ENCODE measurements at regions of chr2 and their contacts with region 1.

Region 1: DNA sequence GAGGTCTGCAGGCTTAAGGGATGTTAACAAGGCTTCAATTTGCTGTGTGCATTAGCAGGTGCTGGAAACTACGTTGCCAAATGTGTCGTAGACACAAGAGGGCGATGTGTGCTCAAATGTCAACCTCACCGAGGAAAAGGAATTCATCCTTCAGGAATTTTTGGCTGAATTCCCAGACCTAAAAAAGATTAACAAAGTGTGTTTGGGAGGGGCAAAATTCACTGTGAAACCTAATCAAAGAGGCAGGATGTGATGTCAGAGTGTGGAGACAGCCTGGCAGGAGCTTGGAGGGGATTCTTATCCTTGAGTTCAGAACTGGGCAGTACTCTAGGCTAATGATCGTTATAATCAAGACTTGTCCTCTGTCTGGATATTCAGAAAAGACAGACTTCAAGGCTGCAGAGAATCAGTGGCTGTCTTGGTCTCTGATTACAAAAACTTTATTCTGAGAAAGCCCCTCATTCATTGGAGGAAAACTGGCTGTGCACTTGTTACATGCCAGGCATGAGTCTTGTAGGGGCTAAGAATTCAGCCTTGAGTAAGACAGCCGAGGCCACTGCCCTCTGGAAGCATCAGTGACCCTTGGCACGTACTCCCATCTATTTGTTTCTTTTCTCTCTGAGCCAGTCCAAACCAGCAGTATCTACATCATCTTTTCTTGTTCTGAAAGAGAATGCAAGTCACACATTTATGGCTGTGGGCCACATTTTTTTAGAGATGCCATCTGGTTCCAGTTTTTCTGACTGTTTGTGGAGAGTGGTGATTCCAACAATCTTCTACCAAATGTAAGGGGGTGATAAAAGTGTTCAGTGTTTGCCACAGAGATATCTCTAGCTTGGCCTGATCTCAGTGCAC is 18.7 kb upstream of the SCYGR1 start:
- DNase-seq: peak in 1 of 2 donors; percentile 87
- H3K4me3 ChIP-seq: peak overlapping the region in 1 of 2 donors; percentile 10
- H3K27ac ChIP-seq: peak overlapping the region; percentile 67 to 84
- H3K4me1 ChIP-seq: peaks cover 0 to 10% of the 10 kb centered on the region in 2 donors
- H3K27me3 ChIP-seq: no peaks in the 10 kb centered on the region
- CTCF ChIP-seq: peak; percentile 57 to 74 (median 63)

Region 2: DNA sequence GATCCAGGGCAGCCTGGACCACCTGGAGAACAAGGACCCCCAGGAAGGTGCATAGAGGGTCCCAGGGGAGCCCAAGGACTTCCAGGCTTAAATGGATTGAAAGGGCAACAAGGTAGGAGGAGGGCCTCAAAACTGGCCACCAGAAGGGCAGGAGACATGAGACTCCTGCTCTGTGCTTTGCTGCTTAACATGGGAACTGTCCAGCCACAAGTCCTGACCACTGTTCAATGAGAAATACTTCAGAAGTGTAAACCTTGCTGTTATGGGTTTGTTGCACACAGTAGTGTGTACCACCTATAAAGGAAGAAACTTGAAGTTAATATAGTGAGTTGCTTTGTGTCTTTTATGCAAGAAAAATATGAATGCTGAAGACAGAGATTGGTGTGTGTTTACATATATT is 125.5 kb before region 1 on chr2:
- intact Hi-C with region 1: no loop called
- DNase-seq: no peak
- H3K4me3 ChIP-seq: no peak overlapping the region
- H3K27ac ChIP-seq: no peak overlapping the region
- H3K4me1 ChIP-seq: no peaks in the 10 kb centered on the region
- H3K27me3 ChIP-seq: no peaks in the 10 kb centered on the region
- CTCF ChIP-seq: no peak

Region 3: GRCh38 chr2:227324995-227325838 is 81.2 kb before region 1 on chr2 and contains the start of gene MFF:
- intact Hi-C with region 1: loop called (anchors 1 kb)
- DNase-seq: peak; percentile 65 to 95
- H3K4me3 ChIP-seq: peak within 1 kb of the TSS; percentile 91 to 95
- H3K27ac ChIP-seq: peak within 1 kb of the TSS; percentile 94 to 95
- H3K4me1 ChIP-seq: peaks cover 0 to 9% of the 10 kb centered on the region in 2 donors
- H3K27me3 ChIP-seq: no peaks in the 10 kb centered on the region
- CTCF ChIP-seq: peak in 1 of 3 experiments; percentile 35
- total RNA-seq, gene MFF: 65.9 TPM

Region 4: DNA sequence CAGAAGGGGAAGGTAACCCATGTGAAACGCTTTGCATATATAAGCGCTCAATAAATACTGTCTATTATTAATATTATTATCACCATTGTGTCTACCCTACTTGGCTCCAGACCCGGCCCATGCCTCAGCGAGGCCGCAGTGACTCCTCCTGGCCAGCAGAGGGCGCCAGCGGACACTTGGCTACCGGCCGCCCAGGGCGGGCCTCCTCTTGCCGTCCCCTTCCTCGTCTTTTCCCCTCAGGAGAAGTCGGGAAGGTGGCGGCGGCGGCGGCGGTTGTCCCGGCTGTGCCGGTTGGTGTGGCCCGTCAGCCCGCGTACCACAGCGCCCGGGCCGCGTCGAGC is 65.5 kb after region 1 on chr2 and contains the start of gene AGFG1:
- intact Hi-C with region 1: loop called (anchors 1 kb)
- DNase-seq: peak; percentile 40 to 92
- H3K4me3 ChIP-seq: peak within 1 kb of the TSS; percentile 95 to 97
- H3K27ac ChIP-seq: peak within 1 kb of the TSS; percentile 92 to 97
- H3K4me1 ChIP-seq: peaks cover 0 to 22% of the 10 kb centered on the region in 2 donors
- H3K27me3 ChIP-seq: no peaks in the 10 kb centered on the region
- CTCF ChIP-seq: peak; percentile 96 to 99 (median 99)
- total RNA-seq, gene AGFG1: 25.5 TPM

Region 5: DNA sequence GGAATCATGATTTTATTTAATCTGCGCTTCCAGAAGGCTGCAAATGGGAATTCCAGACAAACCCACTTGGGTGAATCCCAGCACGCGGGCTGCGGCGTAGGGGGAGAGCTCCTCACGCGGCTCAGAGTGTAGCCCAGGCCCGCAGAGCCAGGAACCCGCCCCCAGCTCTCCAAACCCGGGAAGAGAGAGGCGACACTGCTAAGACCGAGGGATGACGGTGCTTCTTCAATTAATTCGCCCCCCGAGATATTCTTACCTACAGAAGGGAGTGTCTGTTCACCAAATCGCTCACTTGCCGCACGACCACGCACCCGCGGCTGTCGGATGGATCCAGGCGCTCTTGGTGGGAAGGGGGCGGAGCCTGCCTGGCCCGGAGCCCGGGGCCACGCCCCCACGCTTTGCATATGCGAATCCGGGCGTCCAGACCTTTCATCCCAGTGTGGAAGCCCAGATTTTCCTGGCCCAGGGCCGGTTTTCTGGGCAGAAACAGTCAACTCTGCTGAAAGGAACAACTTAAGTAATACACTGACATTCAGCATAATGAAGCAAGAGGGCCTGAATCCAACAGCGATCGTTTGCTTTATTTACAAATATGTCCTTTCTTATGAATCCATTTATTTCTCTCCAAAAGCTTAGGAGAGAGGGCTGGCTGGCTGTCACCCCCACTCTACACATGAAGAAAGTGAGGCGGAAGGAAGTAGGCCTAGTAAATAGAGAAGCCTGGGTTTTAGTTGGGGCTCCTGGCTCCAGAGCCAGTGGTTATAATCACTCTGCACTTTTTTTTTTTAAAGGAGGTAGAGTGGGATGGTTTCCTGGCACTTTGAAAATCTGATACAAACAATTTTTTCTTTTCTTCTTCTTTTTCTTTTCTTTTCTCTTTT is 311.5 kb after region 1 on chr2 and contains the start of gene SLC19A3:
- intact Hi-C with region 1: loop called (anchors 5 kb)
- DNase-seq: peak; percentile 44 to 95
- H3K4me3 ChIP-seq: peak within 1 kb of the TSS; percentile 54 to 60
- H3K27ac ChIP-seq: peak within 1 kb of the TSS; percentile 59 to 79
- H3K4me1 ChIP-seq: peaks cover 0 to 7% of the 10 kb centered on the region in 2 donors
- H3K27me3 ChIP-seq: no peaks in the 10 kb centered on the region
- CTCF ChIP-seq: no peak
- total RNA-seq, gene SLC19A3: 16.5 TPM

Region 6: DNA sequence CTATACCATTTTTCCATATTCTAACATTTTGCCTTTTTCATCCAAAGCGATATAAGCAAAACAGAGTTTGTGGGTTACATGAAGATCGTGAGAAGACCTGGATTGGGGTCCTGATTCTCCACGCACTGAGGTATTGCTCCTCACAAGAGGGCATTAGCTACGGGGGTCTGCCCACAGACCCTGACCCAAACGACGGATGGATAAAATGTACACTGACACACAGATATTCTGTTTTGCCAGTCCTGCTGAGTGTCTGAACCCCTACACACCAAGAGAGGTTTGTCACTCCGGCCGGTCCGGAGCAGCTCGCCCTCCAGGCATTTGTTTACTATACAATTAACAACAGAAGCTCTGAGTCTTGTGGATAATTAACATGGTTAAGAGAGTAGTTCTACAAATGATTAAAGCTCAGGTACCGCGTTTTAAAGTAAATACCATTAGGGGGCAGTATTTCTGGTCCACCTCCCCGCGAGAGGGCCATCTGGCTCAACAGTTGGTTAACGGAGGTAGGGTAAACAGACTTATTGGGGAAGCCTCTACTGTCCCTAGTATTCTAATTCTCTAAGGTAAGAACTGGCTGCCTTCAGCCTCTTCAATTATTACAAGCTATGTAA is 367.7 kb after region 1 on chr2:
- intact Hi-C with region 1: no loop called
- DNase-seq: peak in 1 of 2 donors; percentile 18
- H3K4me3 ChIP-seq: no peak overlapping the region
- H3K27ac ChIP-seq: no peak overlapping the region
- H3K4me1 ChIP-seq: no peaks in the 10 kb centered on the region
- H3K27me3 ChIP-seq: no peaks in the 10 kb centered on the region
- CTCF ChIP-seq: no peak

Region 7: GRCh38 chr2:227817850-227818674 is 411.7 kb after region 1 on chr2:
- intact Hi-C with region 1: loop called (anchors 2 kb)
- DNase-seq: peak; percentile 94 to 100
- H3K4me3 ChIP-seq: peak overlapping the region; percentile 11 to 20
- H3K27ac ChIP-seq: peak overlapping the region; percentile 84 to 85
- H3K4me1 ChIP-seq: peaks cover 9 to 26% of the 10 kb centered on the region in 2 donors
- H3K27me3 ChIP-seq: no peaks in the 10 kb centered on the region
- CTCF ChIP-seq: no peak